CD4-positive, alpha-beta T cell (primary cell): ENCODE measurements at regions of chr20 and their contacts with region 1.

Region 1: DNA sequence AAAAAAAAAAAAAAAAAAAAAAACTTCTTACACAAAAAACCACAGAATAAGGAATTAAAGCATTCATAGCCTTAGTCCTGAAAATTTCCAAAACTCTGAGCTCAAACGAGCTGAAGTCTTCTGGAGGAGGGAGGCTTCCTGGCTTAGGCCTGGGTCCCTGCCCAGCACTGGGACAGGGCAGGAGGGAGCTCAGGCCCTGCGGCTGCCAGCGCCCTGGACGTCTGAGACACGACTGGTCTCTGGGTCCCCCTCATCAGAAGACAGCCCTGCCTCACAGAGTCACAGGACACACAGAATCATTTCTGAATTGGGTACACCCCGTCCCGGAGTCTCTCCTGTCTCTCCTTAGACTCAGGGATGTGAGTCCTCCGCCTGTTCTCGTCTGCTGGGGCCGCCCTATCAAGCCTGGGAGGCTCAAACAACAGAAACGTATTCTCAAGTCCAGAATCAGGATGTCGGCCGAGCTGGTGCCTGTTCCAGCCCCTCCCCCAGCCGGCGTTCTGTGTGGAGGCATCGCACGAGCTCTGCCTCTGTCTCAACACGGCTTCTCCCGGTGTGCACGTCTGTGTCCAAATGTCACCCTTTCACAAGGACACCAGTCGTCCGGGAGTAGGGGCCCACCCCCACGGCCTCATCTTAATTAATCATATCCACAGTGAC is 39.4 kb downstream of the ZBTB46 start:
- DNase-seq: no peak
- ATAC-seq: no peak
- H3K4me3 ChIP-seq: no peak overlapping the region
- H3K4me3 Mint-ChIP-seq: no peak overlapping the region
- H3K27ac ChIP-seq: no peak overlapping the region
- H3K27ac Mint-ChIP-seq: no peak overlapping the region
- H3K4me1 ChIP-seq: peaks cover 5% of the 10 kb centered on the region
- H3K4me1 Mint-ChIP-seq: no peaks in the 10 kb centered on the region
- H3K27me3 ChIP-seq: no peaks in the 10 kb centered on the region
- H3K27me3 Mint-ChIP-seq: peaks cover 3% of the 10 kb centered on the region
- CTCF ChIP-seq: no peak

Region 2: DNA sequence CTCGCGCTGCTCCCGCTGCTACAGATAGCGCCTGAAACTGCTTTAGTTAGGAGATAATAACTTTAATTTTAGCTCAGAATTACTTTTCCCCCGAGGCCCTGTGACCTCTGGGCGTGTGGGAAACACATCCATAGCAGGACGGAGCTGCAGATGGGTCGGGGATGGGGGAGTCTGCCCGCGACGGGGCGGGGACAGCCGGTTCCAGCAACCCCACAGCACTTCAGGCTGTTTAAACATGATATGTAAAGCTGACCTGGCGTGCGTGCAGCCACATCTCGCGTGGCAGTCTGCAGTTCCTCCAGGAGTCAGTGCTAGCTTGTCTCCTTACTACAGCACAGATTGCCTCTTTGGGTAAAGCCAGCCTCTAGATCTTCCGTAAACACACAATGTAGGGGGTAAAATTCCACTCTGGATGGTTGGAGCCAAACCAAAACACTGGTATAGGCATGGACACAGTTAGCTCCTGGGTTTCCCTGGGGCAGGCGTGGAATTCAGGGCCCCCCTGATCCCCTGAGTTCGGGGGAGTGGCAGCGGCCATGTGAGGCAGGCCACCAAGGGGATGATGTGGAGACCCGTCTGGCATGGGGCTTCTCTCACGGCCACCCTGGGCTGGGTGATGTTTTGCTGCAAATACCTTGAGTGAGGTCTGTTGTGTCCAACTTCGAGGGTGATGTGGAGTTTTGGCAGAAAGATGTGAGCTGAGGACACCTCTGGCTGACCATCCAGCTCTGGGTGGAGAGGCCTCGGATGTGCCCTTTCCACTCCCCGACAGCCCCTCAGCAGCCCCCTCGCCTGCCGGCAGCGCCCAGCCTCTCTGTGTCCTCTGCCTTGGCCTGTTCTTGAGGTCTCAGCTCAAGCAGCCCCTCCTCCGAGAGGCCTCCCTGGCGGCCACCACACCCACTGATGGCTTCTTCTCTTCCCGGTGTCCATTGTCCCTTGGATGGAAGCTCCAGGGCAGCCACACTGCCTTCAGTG is 1940.4 kb before region 1 on chr20:
- CTCF ChIA-PET with region 1: no interaction called
- POLR2A ChIA-PET with region 1: no interaction called
- intact Hi-C with region 1: no loop called
- DNase-seq: no peak
- ATAC-seq: no peak
- H3K4me3 ChIP-seq: no peak overlapping the region
- H3K4me3 Mint-ChIP-seq: no peak overlapping the region
- H3K27ac ChIP-seq: no peak overlapping the region
- H3K27ac Mint-ChIP-seq: no peak overlapping the region
- H3K4me1 ChIP-seq: no peaks in the 10 kb centered on the region
- H3K4me1 Mint-ChIP-seq: no peaks in the 10 kb centered on the region
- H3K27me3 ChIP-seq: no peaks in the 10 kb centered on the region
- H3K27me3 Mint-ChIP-seq: no peaks in the 10 kb centered on the region
- CTCF ChIP-seq: no peak

Region 3: GRCh38 chr20:63495741-63496595 is 295.7 kb before region 1 on chr20:
- CTCF ChIA-PET with region 1: no interaction called
- POLR2A ChIA-PET with region 1: no interaction called
- intact Hi-C with region 1: loop called in 1 of 2 experiments (anchors 2 kb)
- DNase-seq: peak; percentile 64 to 88 (median 75)
- ATAC-seq: peak; percentile 68
- H3K4me3 ChIP-seq: peak overlapping the region; percentile 18
- H3K4me3 Mint-ChIP-seq: peak overlapping the region; percentile 45
- H3K27ac ChIP-seq: no peak overlapping the region
- H3K27ac Mint-ChIP-seq: no peak overlapping the region
- H3K4me1 ChIP-seq: peaks cover 33% of the 10 kb centered on the region
- H3K4me1 Mint-ChIP-seq: peaks cover 5% of the 10 kb centered on the region
- H3K27me3 ChIP-seq: peaks cover 30 to 35% of the 10 kb centered on the region in 2 experiments
- H3K27me3 Mint-ChIP-seq: peaks cover 28% of the 10 kb centered on the region
- CTCF ChIP-seq: peak; percentile 93

Region 4: DNA sequence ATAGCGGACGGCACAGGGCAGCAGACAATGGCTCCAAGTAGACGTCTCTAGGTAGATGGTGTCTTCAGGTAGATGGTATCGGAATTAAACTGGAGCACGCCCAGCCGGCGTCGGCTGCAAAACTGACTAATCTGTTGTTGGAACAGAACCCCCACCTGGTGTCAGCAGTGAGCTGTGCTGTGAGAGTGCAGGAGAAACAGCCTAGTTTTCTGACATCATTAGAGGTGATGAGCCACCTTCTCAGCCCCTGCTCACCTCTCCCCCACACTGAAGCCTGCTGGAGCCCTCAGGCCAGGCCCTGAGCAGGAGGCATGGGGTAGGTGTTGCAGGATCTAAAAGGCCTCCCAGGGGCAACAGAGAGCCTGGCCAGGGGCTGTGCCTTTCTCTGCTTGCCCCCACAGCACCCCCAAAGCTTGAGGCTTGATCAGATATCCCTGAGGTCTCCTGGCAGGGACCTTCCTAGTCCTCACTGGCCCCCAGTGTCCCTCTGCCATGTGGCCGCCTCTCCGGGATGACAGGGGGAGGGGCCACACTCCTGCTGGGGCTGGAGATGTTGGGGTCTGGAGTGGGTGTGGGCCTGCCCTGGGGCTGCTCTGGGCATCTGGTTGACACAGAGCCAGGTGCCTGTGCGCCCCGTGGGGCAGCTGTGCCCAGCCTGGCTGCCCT is 210.7 kb before region 1 on chr20:
- CTCF ChIA-PET with region 1: no interaction called
- POLR2A ChIA-PET with region 1: no interaction called
- intact Hi-C with region 1: loop called (anchors 1 to 2 kb)
- DNase-seq: peak; percentile 62 to 87 (median 76)
- ATAC-seq: peak; percentile 99
- H3K4me3 ChIP-seq: no peak overlapping the region
- H3K4me3 Mint-ChIP-seq: no peak overlapping the region
- H3K27ac ChIP-seq: no peak overlapping the region
- H3K27ac Mint-ChIP-seq: peak overlapping the region; percentile 19
- H3K4me1 ChIP-seq: peaks cover 10% of the 10 kb centered on the region
- H3K4me1 Mint-ChIP-seq: peaks cover 20% of the 10 kb centered on the region
- H3K27me3 ChIP-seq: no peaks in the 10 kb centered on the region
- H3K27me3 Mint-ChIP-seq: no peaks in the 10 kb centered on the region
- CTCF ChIP-seq: peak; percentile 63

Region 5: GRCh38 chr20:63756648-63756991 is 35.0 kb before region 1 on chr20:
- CTCF ChIA-PET with region 1: no interaction called
- POLR2A ChIA-PET with region 1: no interaction called
- intact Hi-C with region 1: no loop called
- DNase-seq: peak in 1 of 14 experiments; percentile 71
- ATAC-seq: no peak
- H3K4me3 ChIP-seq: no peak overlapping the region
- H3K4me3 Mint-ChIP-seq: no peak overlapping the region
- H3K27ac ChIP-seq: no peak overlapping the region
- H3K27ac Mint-ChIP-seq: no peak overlapping the region
- H3K4me1 ChIP-seq: peaks cover 15% of the 10 kb centered on the region
- H3K4me1 Mint-ChIP-seq: peaks cover 16% of the 10 kb centered on the region
- H3K27me3 ChIP-seq: no peaks in the 10 kb centered on the region
- H3K27me3 Mint-ChIP-seq: no peaks in the 10 kb centered on the region
- CTCF ChIP-seq: no peak